Breast epithelium (tissue), 4 donors: ENCODE measurements at regions of chr13 and their contacts with region 1.

Region 1: GRCh38 chr13:44218501-44219240 is 155.0 kb upstream of the SERP2 start:
- DNase-seq: peak; percentile 57 to 72
- H3K4me3 ChIP-seq: no peak overlapping the region
- H3K27ac ChIP-seq: peak overlapping the region; percentile 78 to 86
- H3K4me1 ChIP-seq: peaks cover 0 to 5% of the 10 kb centered on the region in 2 donors
- H3K27me3 ChIP-seq: no peaks in the 10 kb centered on the region
- CTCF ChIP-seq: no peak
- POLR2A ChIP-seq: no peak

Region 2: DNA sequence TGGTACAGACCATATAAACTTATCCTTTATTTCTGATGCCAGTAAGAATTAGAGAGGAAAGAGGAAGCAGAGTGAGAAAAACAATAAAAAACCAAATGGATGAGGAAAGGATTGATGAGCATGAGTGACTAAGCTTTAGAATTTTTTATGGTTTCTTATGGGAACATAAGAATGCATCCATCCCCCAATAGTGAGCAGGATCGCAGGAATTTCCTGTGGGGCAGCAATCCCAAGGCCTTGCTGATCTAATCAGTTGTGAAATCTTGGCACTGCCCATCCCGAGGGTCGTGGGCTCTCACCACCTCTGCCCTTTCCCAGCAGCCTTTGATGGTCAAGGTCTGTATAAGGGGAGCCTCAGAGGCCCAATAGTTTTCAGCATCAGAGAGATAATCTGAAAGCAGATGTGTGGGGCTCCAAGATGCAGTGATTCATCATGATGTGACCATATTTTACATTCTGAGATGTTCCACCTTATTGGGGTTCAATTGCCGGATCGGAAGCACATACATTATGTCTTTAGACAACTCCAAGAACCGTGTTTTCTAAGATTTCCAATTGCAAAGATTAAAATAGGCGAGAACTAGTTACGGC is 973.2 kb before region 1 on chr13:
- intact Hi-C with region 1: loop called (anchors 5 kb)
- DNase-seq: no peak
- H3K4me3 ChIP-seq: no peak overlapping the region
- H3K27ac ChIP-seq: no peak overlapping the region
- H3K4me1 ChIP-seq: no peaks in the 10 kb centered on the region
- H3K27me3 ChIP-seq: no peaks in the 10 kb centered on the region
- CTCF ChIP-seq: no peak
- POLR2A ChIP-seq: no peak

Region 3: DNA sequence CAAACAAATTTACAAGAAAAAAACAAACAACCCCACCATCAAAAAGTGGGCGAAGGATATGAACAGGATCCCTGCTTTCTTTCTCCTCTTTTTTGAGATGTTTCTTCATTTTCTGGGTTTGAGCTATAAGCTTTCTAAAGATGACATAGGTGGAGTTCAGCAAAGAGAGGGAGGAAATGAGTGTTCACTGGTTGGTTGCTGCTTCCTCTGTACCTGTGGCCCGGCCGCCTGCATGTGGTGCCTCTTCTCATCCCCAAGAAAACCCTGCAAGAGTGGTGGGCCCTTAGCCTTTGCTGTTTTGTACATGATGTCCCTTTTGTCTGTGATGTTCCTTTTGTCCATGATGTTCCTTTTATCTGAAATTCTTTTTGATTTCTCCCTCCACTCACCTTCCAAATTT is 23.4 kb before region 1 on chr13:
- intact Hi-C with region 1: loop called (anchors 1 kb)
- DNase-seq: no peak
- H3K4me3 ChIP-seq: no peak overlapping the region
- H3K27ac ChIP-seq: no peak overlapping the region
- H3K4me1 ChIP-seq: no peaks in the 10 kb centered on the region
- H3K27me3 ChIP-seq: no peaks in the 10 kb centered on the region
- CTCF ChIP-seq: no peak
- POLR2A ChIP-seq: no peak